ENCODE measurements at regions of chr12 and their contacts with region 1.

Region 1: DNA sequence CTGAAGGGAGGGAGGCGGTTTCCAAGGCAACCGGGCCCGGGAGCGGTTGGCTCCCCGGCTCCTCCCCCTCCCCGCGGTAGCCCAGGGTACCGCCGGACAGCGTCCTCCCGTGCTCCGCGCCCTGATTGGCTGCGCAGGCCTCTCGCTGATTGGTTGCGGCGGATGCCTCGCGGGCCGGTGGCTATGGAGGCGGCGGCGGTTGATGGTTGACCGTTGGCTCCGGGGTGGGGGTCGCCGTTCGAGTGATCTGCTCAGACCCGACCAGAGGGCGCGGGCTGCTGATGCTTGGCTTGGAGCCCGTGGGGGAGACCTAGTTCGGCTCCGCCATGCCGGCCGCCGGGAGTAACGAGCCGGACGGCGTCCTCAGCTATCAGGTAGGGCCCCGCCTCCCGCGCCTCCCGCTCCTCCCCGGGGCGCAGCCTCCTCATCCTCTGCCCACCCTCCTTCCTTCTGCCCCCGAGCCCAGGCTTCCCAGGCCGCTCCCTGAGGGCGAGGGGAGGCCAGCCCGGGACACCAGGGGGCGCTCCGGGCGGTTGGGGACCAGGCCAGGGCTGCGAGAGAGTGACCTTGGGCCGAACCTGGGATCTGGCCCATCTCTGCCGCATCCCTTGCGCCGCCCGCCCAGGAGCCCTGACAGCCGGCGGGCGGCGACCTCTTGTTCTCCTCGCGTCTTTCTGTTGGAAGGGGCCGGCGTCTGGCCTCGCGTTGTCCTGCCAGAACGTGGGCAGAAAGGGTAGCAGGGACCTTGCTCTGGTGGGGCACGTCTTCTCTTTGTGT is at the start of gene SLC4A8:
- DNase-seq: peak; percentile 89
- H3K4me3 Mint-ChIP-seq: peak within 1 kb of the TSS; percentile 80
- H3K27ac Mint-ChIP-seq: peak within 1 kb of the TSS; percentile 55
- H3K4me1 Mint-ChIP-seq: peaks cover 42% of the 10 kb centered on the region
- H3K27me3 Mint-ChIP-seq: peaks cover 32% of the 10 kb centered on the region

Region 2: DNA sequence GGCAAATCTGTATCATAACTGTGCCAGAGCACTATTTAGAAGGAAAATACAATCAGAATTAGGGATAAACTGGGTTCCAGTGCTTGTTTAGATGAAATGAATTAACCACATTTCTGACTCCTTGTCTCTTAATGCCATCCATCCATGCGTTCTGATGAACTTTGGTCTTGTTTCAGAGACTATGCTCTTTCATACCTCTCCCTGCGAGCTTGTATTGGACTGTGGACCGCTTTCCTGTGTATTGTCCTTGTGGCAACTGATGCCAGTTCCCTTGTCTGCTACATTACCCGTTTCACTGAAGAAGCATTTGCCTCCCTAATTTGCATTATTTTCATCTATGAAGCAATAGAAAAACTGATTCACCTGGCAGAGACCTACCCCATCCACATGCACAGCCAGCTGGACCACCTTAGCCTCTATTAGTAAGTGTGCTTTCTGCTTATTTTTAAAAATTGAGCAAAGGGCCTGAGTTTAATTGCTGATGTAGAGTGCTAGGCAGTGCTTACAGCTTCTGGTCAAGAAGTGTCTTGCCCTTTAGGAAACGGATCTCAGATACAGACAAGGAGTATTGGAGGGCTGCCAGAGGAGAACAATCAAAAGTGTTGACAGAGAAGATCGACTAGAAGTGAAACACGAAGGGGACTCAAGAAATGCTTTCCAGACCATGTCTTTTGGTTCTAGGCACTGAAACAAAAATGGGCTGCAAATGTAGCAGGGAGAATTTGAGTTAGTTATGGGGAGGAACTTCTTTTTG is 46.4 kb after region 1 on chr12:
- CTCF ChIA-PET with region 1: no interaction called
- DNase-seq: no peak
- H3K4me3 Mint-ChIP-seq: no peak overlapping the region
- H3K27ac Mint-ChIP-seq: no peak overlapping the region
- H3K4me1 Mint-ChIP-seq: no peaks in the 10 kb centered on the region
- H3K27me3 Mint-ChIP-seq: no peaks in the 10 kb centered on the region

Region 3: DNA sequence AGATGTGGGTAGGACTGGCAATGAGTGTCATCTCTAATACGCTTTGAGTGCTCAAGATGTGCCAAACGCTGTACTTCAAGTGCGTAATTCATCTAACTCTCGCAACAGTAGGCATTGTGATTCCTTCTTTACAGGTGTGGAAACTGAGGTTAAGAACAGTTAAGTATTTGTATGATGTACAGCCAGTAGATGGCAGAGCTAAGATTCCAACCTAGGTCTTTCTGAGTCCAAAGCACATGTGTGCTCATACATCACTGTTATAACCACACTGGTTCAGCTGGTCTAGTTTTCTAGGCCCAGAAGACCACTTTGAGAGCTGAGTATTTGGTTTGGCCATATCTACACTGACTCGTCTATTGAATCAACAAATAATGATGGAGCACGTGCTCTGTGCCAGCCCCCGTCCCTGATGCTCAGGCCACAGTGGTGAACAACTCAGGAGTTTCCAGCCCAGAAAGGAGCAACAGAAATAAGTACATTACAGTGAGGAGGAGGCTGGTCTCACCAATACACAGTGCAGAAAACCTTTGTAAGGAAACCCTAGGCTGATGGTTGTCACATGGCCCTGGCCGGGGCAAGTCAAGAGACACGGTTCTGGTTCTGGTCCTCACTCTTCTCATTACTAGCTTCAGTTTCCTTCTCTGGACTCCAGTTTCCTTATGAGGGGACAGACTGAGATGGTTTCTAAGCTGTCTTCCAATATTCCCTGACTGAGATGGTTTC is 96.9 kb after region 1 on chr12:
- CTCF ChIA-PET with region 1: interaction called, 43 read pairs
- DNase-seq: no peak
- H3K4me3 Mint-ChIP-seq: no peak overlapping the region
- H3K27ac Mint-ChIP-seq: no peak overlapping the region
- H3K4me1 Mint-ChIP-seq: no peaks in the 10 kb centered on the region
- H3K27me3 Mint-ChIP-seq: peaks cover 21% of the 10 kb centered on the region

Region 4: GRCh38 chr12:51538599-51538998 is 113.7 kb after region 1 on chr12:
- CTCF ChIA-PET with region 1: interaction called, 199 read pairs
- DNase-seq: no peak
- H3K4me3 Mint-ChIP-seq: no peak overlapping the region
- H3K27ac Mint-ChIP-seq: no peak overlapping the region
- H3K4me1 Mint-ChIP-seq: no peaks in the 10 kb centered on the region
- H3K27me3 Mint-ChIP-seq: peaks cover 39% of the 10 kb centered on the region

Region 5: DNA sequence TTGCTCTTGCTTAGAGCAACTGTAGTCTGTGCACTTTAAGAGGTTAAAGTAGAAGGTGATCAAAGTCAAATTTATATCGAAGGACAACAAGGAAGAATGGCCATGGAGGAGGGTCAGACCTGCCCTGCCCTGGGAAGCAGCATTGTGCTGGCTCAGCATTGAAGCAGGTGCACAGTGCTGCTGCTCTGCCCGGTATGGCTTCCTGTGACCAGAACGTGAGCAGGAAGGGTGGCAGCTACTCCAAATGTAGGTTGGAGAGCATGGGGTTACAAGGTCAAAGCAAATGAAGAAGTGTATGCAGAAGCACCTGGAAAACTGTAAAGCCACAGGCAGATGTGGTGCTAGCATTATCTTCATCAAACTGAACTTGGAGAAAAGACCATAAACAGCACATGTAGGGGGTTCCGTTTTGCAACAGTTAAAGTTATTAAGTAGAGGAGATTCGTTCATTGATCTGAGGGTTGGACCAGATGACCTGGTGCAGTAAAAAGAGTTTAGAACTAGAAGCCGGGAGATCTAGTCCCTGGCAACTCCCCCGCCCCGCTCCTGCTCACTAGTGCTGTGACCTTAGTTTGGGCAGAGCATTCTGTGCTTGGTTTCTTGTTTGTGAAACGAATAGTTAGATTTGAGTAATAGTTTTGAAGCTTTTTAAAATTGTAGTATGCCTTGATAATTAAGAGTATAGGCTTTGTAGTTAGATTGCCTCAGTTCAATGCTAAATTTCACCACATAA is 250.4 kb after region 1 on chr12:
- CTCF ChIA-PET with region 1: interaction called, 12 read pairs
- DNase-seq: no peak
- H3K4me3 Mint-ChIP-seq: no peak overlapping the region
- H3K27ac Mint-ChIP-seq: no peak overlapping the region
- H3K4me1 Mint-ChIP-seq: peaks cover 2% of the 10 kb centered on the region
- H3K27me3 Mint-ChIP-seq: peaks cover 11% of the 10 kb centered on the region

Region 6: DNA sequence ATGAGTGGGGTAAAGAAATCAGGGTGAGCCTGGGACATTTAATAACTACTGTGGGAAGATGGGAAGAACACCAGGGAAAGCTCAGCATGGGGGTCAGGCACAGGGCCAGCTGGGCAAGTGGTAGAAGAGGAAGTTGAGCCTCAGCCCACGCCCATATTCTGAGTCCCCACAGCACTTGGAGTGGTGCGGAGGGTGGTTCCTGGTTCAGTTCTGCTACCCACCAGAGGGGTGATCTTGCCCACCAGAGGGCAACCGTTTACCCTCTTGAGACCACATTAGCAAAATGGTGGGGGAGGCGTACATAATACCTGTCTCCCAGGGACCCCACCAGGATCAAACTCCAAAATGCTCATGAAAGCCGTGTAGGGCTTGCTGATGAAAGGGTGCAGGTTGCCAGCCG is 446.3 kb after region 1 on chr12:
- CTCF ChIA-PET with region 1: interaction called, 12 read pairs
- DNase-seq: no peak
- H3K4me3 Mint-ChIP-seq: no peak overlapping the region
- H3K27ac Mint-ChIP-seq: no peak overlapping the region
- H3K4me1 Mint-ChIP-seq: peaks cover 7% of the 10 kb centered on the region
- H3K27me3 Mint-ChIP-seq: peaks cover 75% of the 10 kb centered on the region